WTC11 (cell line): ENCODE measurements at regions of chr2 and their contacts with region 1.

Region 1: DNA sequence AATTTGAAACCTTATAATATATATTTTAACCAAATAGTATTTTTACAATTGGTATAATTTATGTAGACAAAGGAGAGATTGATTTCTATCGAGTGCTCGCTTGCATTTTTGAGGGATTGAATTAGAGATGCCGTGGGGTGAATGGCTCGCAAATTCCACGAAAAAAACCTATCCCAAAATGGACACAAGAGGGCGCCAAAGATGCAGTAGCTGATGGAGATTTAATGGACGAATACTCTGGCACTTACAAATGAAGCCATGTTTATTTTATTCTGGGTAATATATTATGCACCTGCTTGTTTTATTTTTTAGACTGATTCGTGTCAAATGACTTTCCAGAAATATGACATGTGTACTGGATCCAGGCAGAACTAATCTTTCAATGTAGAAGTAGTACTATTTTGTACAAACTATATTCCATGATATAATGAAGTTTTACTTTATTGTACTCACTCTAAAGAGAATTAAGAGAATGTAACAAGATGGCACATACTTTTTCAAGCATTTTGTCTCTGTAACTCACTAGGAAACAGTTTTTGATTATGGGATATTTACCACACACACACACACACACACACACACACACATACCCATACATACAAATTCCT is 505.4 kb downstream of the PLCL1 start:
- DNase-seq: peak; percentile 53
- ATAC-seq: peak; percentile 40; the same call in 1 of the 2 replicates
- H3K4me3 Mint-ChIP-seq: no peak overlapping the region
- H3K27ac Mint-ChIP-seq: no peak overlapping the region
- H3K4me1 Mint-ChIP-seq: peaks cover 20% of the 10 kb centered on the region
- H3K27me3 Mint-ChIP-seq: no peaks in the 10 kb centered on the region
- CTCF ChIP-seq: peak; percentile 73

Region 2: GRCh38 chr2:198321522-198322088 is 11.8 kb after region 1 on chr2:
- CTCF ChIA-PET with region 1: interaction called, 14 read pairs
- POLR2A ChIA-PET with region 1: no interaction called
- DNase-seq: no peak
- ATAC-seq: no peak
- H3K4me3 Mint-ChIP-seq: no peak overlapping the region
- H3K27ac Mint-ChIP-seq: no peak overlapping the region
- H3K4me1 Mint-ChIP-seq: peaks cover 32% of the 10 kb centered on the region
- H3K27me3 Mint-ChIP-seq: no peaks in the 10 kb centered on the region
- CTCF ChIP-seq: no peak

Region 3: DNA sequence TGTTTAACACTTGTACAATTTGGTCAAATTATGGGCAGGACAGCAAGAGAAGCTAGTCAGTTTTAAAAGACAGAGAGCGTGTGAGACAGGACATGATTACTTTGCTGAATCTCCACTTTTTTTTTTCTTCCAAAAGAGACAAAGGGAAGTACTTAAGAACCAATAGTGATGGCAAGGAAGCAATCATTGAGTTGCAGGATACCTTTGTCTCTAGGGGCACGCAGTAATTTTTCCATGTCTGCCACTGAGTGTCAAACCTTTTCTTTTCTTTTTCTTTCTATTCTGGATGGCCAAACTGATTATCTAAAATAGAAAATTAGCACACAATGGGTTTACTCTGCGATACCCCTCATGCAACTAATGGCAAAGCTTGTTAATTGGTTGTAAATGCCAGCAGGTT is 27.6 kb after region 1 on chr2:
- CTCF ChIA-PET with region 1: interaction called, 16 read pairs
- POLR2A ChIA-PET with region 1: no interaction called
- DNase-seq: no peak
- ATAC-seq: peak; percentile 64
- H3K4me3 Mint-ChIP-seq: 0 out of 2 replicates have a peak overlapping the region, but pooled peaks have one; percentile 9
- H3K27ac Mint-ChIP-seq: peak overlapping the region; percentile 24; the same call in 1 of the 2 replicates
- H3K4me1 Mint-ChIP-seq: peaks cover 32% of the 10 kb centered on the region
- H3K27me3 Mint-ChIP-seq: no peaks in the 10 kb centered on the region
- CTCF ChIP-seq: no peak